ENCODE measurements at regions of chr11 and their contacts with region 1.

Region 1: GRCh38 chr11:62081378-62082291 is 42.2 kb upstream of the INCENP start:
- DNase-seq: peak; percentile 76 to 84
- H3K4me3 ChIP-seq: no peak overlapping the region
- H3K27ac ChIP-seq: no peak overlapping the region
- H3K4me1 ChIP-seq: peaks cover 0 to 4% of the 10 kb centered on the region in 2 donors
- H3K27me3 ChIP-seq: no peaks in the 10 kb centered on the region
- CTCF ChIP-seq: peak; percentile 79 to 97 (median 92)
- POLR2A ChIP-seq: no peak

Region 2: GRCh38 chr11:61803889-61804647 is 277.6 kb before region 1 on chr11:
- intact Hi-C with region 1: loop called (anchors 10 kb)
- DNase-seq: no peak
- H3K4me3 ChIP-seq: no peak overlapping the region
- H3K27ac ChIP-seq: no peak overlapping the region
- H3K4me1 ChIP-seq: no peaks in the 10 kb centered on the region
- H3K27me3 ChIP-seq: no peaks in the 10 kb centered on the region
- CTCF ChIP-seq: no peak
- POLR2A ChIP-seq: no peak

Region 3: DNA sequence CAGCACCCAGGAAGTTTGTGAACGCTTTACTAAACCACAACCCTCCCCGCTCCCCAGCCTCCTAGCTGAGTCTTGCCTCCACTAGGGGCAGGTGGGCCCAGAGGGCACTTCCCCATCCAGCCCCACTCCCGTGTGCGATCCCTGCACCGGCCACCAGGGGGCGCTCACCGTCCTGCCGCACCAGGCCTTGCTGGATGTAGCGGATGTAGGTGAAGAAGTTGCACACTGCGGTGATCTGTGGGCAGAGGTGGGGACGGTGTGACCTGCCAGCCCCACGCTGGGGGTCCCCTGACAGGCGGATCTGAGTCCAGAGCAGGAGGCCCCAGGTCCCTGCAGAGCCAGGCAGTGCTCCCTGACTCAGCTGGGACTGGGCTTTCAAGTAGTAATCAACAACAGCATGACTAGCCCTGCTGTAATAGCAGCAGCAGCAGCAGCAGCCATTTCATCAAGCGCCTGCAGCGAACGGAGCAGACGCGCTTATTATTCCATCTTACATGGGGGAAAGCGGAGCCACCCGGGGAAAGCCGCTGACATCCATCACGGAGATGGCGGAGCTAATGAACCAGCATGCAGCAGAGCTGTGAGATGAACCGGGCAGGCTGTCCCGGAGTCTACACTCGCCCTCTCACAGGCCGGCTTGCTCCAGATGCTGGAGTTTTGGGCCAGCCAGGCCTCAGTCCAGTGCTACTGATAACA is 182.3 kb before region 1 on chr11:
- intact Hi-C with region 1: loop called (anchors 5 kb)
- DNase-seq: peak; percentile 66 to 70
- H3K4me3 ChIP-seq: no peak overlapping the region
- H3K27ac ChIP-seq: peak overlapping the region in 1 of 3 donors; percentile 9
- H3K4me1 ChIP-seq: peaks cover 0 to 5% of the 10 kb centered on the region in 2 donors
- H3K27me3 ChIP-seq: no peaks in the 10 kb centered on the region
- CTCF ChIP-seq: peak; percentile 92 to 100 (median 98)
- POLR2A ChIP-seq: no peak

Region 4: DNA sequence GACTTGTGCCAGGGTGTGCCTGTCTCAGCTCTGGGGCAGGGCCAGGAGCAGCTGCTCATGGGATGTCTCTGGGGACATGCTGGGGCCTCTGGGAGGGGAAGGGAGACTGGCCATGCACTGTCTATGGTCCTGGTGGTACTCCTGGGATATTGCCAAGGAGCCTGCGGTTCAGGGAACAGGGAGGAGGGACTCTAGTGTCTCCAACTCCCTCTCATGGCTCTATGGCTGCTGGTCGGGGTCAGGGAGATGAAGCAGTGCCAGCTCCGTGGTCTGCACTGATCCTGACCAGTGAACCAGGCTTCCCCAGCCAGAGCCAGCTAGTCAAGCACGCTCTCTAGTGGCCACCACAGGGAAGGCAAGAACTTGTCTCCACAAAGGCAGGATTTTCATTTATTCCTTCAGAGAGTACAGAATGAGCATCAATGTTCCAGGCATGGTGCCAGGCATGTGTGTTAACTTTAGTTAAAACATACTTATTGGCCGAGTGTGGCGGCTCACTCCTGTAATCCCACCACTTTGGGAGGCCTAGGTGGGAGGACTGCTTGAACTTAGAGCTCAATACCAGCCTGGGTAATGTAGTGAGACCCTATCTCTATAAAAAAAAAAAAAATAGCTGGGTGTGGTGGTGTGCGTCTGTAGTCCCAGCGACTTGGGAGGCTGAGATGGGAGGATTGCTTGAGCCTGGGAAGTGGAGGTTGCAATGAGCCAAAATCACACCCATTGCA is 134.0 kb before region 1 on chr11:
- intact Hi-C with region 1: loop called (anchors 5 kb)
- DNase-seq: peak; percentile 91
- H3K4me3 ChIP-seq: no peak overlapping the region
- H3K27ac ChIP-seq: no peak overlapping the region
- H3K4me1 ChIP-seq: peaks cover 5 to 11% of the 10 kb centered on the region in 2 donors
- H3K27me3 ChIP-seq: no peaks in the 10 kb centered on the region
- CTCF ChIP-seq: peak; percentile 70 to 94 (median 89)
- POLR2A ChIP-seq: no peak

Measured in thyroid gland (tissue), 4 donors.